Ovary (tissue), 10 donors: ENCODE measurements at regions of chr1 and their contacts with region 1.

Region 1: DNA sequence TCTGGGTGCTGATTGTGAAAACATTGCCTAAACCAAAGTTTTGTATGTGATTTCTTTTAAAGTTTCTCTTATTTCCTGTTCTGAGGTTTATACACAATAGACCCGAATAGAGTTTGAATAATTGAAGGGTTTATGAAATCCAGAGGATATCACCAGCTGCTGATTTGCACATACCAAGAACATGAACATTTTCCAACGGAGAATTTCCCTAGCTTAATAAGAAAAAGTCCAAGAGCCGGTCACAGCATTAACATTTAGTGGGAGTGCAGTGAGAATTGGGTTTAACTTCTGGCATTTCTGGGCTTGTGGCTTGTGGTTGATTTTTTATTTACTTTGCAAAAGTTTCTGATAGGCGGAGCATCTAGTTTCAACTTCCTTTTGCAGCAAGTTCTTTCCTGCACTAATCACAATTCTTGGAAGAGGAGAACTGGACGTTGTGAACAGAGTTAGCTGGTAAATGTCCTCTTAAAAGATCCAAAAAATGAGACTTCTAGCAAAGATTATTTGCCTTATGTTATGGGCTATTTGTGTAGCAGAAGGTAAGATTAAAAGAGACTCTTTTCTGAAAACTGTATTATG is at the start of gene CFH:
- DNase-seq: peak in 1 of 5 donors; percentile 34
- H3K4me3 ChIP-seq: peak within 1 kb of the TSS; percentile 12
- H3K27ac ChIP-seq: peak within 1 kb of the TSS in 1 of 2 donors; percentile 60
- H3K4me1 ChIP-seq: peaks cover 1% of the 10 kb centered on the region
- H3K27me3 ChIP-seq: no peaks in the 10 kb centered on the region
- CTCF ChIP-seq: peak in 1 of 3 donors; percentile 5
- EP300 ChIP-seq: no peak
- POLR2A ChIP-seq: peak; percentile 81
- total RNA-seq, gene CFH: 95.4 to 438 (median 271) TPM

Region 2: GRCh38 chr1:196355206-196355786 is 296.4 kb before region 1 on chr1:
- intact Hi-C with region 1: loop called in 2 of 4 experiments (anchors 5 to 10 kb)
- DNase-seq: peak in 1 of 5 donors; percentile 16
- H3K4me3 ChIP-seq: no peak overlapping the region
- H3K27ac ChIP-seq: no peak overlapping the region
- H3K4me1 ChIP-seq: no peaks in the 10 kb centered on the region
- H3K27me3 ChIP-seq: no peaks in the 10 kb centered on the region
- CTCF ChIP-seq: peak in 2 of 3 donors; percentile 62 to 68
- EP300 ChIP-seq: no peak
- POLR2A ChIP-seq: no peak

Region 3: GRCh38 chr1:196608390-196609369 is 43.0 kb before region 1 on chr1 and contains the start of gene KCNT2:
- intact Hi-C with region 1: loop called in 1 of 4 experiments (anchors 10 kb)
- DNase-seq: peak; percentile 80 to 88 (median 86)
- H3K4me3 ChIP-seq: peak within 1 kb of the TSS; percentile 37
- H3K27ac ChIP-seq: peak within 1 kb of the TSS; percentile 72 to 89
- H3K4me1 ChIP-seq: peaks cover 3% of the 10 kb centered on the region
- H3K27me3 ChIP-seq: no peaks in the 10 kb centered on the region
- CTCF ChIP-seq: peak in 2 of 3 donors; percentile 15 to 24
- EP300 ChIP-seq: no peak
- POLR2A ChIP-seq: peak; percentile 40
- total RNA-seq, gene KCNT2: 9.3 to 34.9 (median 22.1) TPM